ENCODE measurements at regions of chr14 and their contacts with region 1.

Region 1: DNA sequence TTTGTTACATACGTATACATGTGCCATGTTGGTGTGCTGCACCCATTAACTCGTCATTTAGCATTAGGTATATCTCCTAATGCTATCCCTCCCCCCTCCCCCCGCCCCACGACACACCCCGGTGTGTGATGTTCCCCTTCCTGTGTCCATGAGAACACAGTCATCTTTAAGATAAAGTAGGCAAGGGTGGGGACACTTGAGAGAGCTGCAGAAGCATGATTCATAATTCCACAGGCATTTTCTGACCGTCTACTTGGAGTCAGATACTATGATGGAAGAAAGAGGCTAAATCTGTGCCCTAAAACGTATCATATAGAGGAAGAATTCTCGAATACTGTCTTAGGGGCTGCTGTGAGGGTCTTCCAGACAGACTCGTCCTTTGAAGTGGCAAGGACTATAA is 145.9 kb upstream of the VASH1 start:
- DNase-seq: no peak
- ATAC-seq: no peak
- H3K4me3 Mint-ChIP-seq: no peak overlapping the region
- H3K27ac Mint-ChIP-seq: no peak overlapping the region
- H3K4me1 Mint-ChIP-seq: no peaks in the 10 kb centered on the region
- H3K27me3 Mint-ChIP-seq: peaks cover 14% of the 10 kb centered on the region

Region 2: GRCh38 chr14:76109087-76109880 is 506.0 kb before region 1 on chr14:
- CTCF ChIA-PET with region 1: no interaction called
- POLR2A ChIA-PET with region 1: no interaction called
- intact Hi-C with region 1: loop called in 1 of 2 experiments (anchors 10 kb)
- DNase-seq: no peak
- ATAC-seq: no peak
- H3K4me3 Mint-ChIP-seq: no peak overlapping the region
- H3K27ac Mint-ChIP-seq: no peak overlapping the region
- H3K4me1 Mint-ChIP-seq: no peaks in the 10 kb centered on the region
- H3K27me3 Mint-ChIP-seq: peaks cover 7% of the 10 kb centered on the region

Region 3: DNA sequence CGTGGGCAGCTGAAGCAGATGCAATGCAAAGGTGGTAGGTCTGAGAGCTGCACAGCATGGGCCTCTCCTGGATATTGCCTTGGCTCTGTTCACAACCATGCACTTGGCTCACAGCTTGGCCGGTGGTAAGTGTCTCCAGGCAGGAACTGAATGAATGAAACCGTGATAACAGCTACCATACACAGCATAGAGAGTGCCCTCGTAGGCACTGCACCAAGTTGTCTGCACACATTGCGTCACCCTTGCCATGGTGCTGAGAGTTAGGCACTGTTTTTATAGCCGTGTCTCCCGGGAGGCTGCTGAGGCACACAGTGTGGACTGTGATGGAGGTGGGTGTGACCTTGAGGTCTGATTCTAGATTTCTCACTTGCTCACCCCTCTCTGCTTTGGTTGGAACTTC is 11.6 kb before region 1 on chr14:
- CTCF ChIA-PET with region 1: no interaction called
- POLR2A ChIA-PET with region 1: no interaction called
- intact Hi-C with region 1: no loop called
- DNase-seq: no peak
- ATAC-seq: no peak
- H3K4me3 Mint-ChIP-seq: no peak overlapping the region
- H3K27ac Mint-ChIP-seq: no peak overlapping the region
- H3K4me1 Mint-ChIP-seq: no peaks in the 10 kb centered on the region
- H3K27me3 Mint-ChIP-seq: peaks cover 12% of the 10 kb centered on the region

Measured in activated CD4-positive, alpha-beta T cell treated with anti-CD3 and anti-CD28 coated beads for 36 hours (primary cell).